Activated CD4-positive, alpha-beta T cell treated with anti-CD3 and anti-CD28 coated beads, Interleukin-2, amount 10 ng/mL, durations not matched to agents 24 days and 14 days (primary cell): ENCODE measurements at regions of chr1 and their contacts with region 1.

Region 1: GRCh38 chr1:241531195-241532161 is 700 bp upstream of the KMO start:
- DNase-seq: peak; percentile 58
- H3K4me3 Mint-ChIP-seq: peak overlapping the region; percentile 89
- H3K27ac Mint-ChIP-seq: peak overlapping the region; percentile 86
- H3K4me1 Mint-ChIP-seq: peaks cover 15% of the 10 kb centered on the region
- H3K27me3 Mint-ChIP-seq: peaks cover 28% of the 10 kb centered on the region

Region 2: GRCh38 chr1:241447031-241447644 is 84.3 kb before region 1 on chr1:
- intact Hi-C with region 1: no loop called
- DNase-seq: no peak
- H3K4me3 Mint-ChIP-seq: no peak overlapping the region
- H3K27ac Mint-ChIP-seq: no peak overlapping the region
- H3K4me1 Mint-ChIP-seq: no peaks in the 10 kb centered on the region
- H3K27me3 Mint-ChIP-seq: no peaks in the 10 kb centered on the region

Region 3: DNA sequence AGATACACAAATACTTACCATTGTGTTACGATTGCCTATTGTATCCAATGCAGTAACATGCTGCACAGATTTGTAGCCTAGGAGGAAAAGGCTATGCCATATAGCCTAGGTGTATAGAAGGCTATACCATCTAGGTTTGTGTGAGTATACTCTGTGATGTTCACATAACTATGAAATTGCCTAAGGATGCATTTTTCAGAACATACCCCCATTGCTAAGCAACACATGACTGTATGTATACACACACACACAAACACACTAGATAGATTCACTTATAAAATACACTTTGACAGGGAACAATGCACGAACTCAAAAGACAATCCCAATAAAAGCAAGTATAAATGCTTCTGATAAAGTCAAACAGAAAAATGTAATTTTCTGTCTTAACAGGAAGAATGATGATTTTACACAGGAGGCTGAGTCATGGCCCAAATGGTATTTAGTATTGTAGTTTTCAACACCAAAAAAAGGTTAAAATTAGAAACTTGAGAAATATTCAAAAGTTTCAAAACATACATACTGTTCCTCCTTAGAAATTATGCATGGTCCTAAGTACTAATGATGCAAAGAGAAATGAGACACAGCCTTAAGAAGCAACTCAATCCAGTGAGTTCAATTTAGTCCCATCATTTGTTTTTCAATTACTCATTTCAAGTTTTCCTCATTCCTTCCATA is 24.2 kb before region 1 on chr1:
- intact Hi-C with region 1: no loop called
- DNase-seq: no peak
- H3K4me3 Mint-ChIP-seq: no peak overlapping the region
- H3K27ac Mint-ChIP-seq: no peak overlapping the region
- H3K4me1 Mint-ChIP-seq: peaks cover 16% of the 10 kb centered on the region
- H3K27me3 Mint-ChIP-seq: no peaks in the 10 kb centered on the region

Region 4: GRCh38 chr1:241551759-241552638 is 20.5 kb after region 1 on chr1:
- intact Hi-C with region 1: loop called (anchors 1 kb)
- DNase-seq: peak; percentile 77
- H3K4me3 Mint-ChIP-seq: peak overlapping the region; percentile 82
- H3K27ac Mint-ChIP-seq: peak overlapping the region; percentile 89
- H3K4me1 Mint-ChIP-seq: peaks cover 15% of the 10 kb centered on the region
- H3K27me3 Mint-ChIP-seq: peaks cover 2% of the 10 kb centered on the region

Region 5: GRCh38 chr1:241611063-241611462 is 79.6 kb after region 1 on chr1:
- intact Hi-C with region 1: loop called (anchors 1 kb)
- DNase-seq: peak; percentile 71
- H3K4me3 Mint-ChIP-seq: no peak overlapping the region
- H3K27ac Mint-ChIP-seq: no peak overlapping the region
- H3K4me1 Mint-ChIP-seq: peaks cover 5% of the 10 kb centered on the region
- H3K27me3 Mint-ChIP-seq: no peaks in the 10 kb centered on the region

Region 6: DNA sequence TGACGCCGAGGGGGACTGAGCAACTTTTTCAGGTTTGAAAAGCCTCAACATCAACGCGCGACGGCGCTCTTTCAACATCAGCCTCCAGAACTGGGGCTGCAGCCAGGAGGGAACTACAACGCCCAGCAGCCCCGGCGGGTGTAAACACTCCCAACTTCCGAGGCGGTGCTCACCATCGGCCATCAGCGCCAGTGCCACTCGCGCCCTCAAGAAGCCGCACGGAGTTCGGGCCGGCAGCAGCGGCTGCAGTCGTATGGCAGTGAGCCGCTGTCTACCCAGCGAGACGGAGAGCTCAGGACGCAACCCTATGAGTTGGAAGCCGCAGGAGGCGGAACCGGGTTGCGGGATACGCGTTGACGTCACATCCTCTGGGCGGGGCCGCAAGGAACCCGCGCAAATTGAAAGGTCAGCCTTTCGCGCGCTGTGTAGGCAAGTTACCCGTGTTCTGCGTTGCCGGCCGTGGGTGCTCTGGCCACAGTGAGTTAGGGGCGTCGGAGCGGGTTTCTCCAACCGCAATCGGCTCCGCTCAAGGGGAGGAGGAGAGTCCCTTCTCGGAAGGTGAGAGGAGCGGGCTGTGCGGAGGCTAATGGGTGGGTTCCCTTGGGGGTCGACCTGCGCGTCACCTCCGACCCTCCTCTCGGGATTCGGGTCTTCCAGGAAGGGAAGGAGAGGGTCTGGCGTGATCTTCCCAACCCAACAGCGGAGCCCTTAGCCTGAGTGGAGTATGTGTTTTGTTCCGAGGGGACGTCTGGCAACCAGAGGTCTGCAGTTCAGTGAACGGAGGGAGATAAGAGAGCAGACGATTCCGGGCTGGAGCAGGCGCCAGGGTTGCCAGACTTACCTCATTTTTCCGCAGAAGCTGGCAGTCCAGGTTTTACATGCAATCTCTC is 316.6 kb after region 1 on chr1 and contains the start of gene EXO1:
- intact Hi-C with region 1: loop called (anchors 1 kb)
- DNase-seq: peak; percentile 97
- H3K4me3 Mint-ChIP-seq: peak within 1 kb of the TSS; percentile 94
- H3K27ac Mint-ChIP-seq: peak within 1 kb of the TSS; percentile 99
- H3K4me1 Mint-ChIP-seq: peaks cover 28% of the 10 kb centered on the region
- H3K27me3 Mint-ChIP-seq: peaks cover 1% of the 10 kb centered on the region
- total RNA-seq, gene EXO1: 60.9 and 63.5 TPM in 2 replicates

Region 7: GRCh38 chr1:241998412-241998921 is 467.0 kb after region 1 on chr1:
- intact Hi-C with region 1: loop called (anchors 1 kb)
- DNase-seq: peak; percentile 84
- H3K4me3 Mint-ChIP-seq: peak overlapping the region; percentile 70
- H3K27ac Mint-ChIP-seq: no peak overlapping the region
- H3K4me1 Mint-ChIP-seq: peaks cover 6% of the 10 kb centered on the region
- H3K27me3 Mint-ChIP-seq: no peaks in the 10 kb centered on the region